ENCODE measurements at regions of chr19 and their contacts with region 1.

Region 1: DNA sequence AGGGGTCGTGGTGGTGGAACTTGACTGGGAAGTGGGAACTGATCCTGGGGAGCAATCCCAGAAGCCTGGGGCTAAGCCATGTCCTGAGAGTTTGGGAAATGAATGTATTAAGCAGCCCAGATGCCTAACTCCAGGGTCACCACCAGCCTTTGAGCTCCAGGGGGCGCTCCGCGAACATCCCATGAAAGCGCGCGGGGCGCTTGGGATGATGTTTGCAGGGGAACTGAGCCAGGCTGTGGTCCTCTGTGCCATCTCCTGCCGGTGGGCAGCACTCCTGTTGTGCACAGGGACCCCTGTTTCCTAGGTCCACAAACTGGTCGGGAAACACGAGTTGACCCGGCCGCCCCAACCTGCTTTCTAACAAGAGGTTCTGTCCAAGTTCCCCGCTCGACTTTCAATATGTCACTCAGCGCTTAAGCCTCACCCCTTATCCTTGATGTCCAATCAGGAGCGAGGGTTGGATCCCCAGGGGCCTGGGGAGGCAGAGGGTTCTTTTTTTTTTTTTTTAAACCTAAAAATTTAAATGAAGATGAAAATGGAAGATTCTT is 14.4 kb downstream of the LEUTX start:
- DNase-seq: peak; percentile 85
- ATAC-seq: peak; percentile 92
- H3K4me3 Mint-ChIP-seq: peak overlapping the region; percentile 69
- H3K27ac Mint-ChIP-seq: no peak overlapping the region
- H3K4me1 Mint-ChIP-seq: peaks cover 28% of the 10 kb centered on the region
- H3K27me3 Mint-ChIP-seq: peaks cover 3% of the 10 kb centered on the region; the same call in 1 of the 2 replicates
- CTCF ChIP-seq: peak; percentile 93

Region 2: GRCh38 chr19:39705578-39706188 is 87.4 kb before region 1 on chr19:
- CTCF ChIA-PET with region 1: no interaction called
- POLR2A ChIA-PET with region 1: no interaction called
- DNase-seq: no peak
- ATAC-seq: no peak
- H3K4me3 Mint-ChIP-seq: no peak overlapping the region
- H3K27ac Mint-ChIP-seq: no peak overlapping the region
- H3K4me1 Mint-ChIP-seq: no peaks in the 10 kb centered on the region
- H3K27me3 Mint-ChIP-seq: peaks cover 12% of the 10 kb centered on the region
- CTCF ChIP-seq: no peak

Region 3: DNA sequence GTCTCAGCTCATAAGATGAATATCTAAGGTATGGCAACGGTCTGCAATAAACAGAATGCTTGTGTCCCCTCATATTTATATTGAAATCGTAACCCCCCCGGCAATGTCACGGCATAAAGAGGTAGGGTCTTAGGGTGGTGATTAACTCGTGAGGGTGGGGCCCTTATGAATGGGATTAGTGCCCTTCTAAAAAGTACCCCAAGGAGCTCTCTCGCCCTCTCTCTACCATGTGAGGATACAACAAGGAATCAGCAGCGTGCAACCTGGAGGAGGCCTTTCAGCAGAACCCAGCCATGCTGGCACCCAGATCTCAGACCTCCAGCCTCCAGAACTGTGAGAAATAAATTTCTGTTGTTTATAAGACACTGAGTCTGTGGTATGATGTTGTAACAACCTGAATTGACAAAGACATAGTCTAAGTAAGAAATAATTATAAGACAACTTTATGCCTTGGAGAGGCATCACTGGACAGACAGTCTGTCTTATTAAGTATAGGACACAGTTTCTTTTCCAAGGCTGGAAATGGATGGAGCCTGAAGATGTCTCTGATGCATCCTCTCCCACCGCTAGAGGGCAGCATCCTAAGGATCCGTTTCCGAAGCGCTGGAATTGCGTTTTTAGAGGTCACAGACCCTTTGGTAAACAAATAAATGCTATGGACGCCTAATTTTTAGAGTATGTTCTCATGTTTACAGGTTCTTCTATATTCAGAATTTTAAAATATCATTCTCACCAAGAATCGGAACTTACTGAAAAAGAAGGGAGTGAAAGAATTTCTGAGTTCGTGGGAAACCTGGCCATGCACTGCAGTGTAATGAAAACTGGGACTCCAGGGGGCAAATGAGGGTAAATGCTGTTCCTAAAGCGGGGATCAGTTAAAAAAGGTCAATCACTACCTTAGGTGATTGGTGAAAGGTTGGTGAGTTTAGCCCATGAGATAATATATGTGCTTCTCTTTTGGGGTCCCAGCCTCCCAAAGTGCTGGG is 27.7 kb before region 1 on chr19:
- CTCF ChIA-PET with region 1: interaction called, 43 read pairs
- POLR2A ChIA-PET with region 1: no interaction called
- DNase-seq: peak; percentile 73
- ATAC-seq: peak; percentile 38
- H3K4me3 Mint-ChIP-seq: no peak overlapping the region
- H3K27ac Mint-ChIP-seq: no peak overlapping the region
- H3K4me1 Mint-ChIP-seq: peaks cover 34% of the 10 kb centered on the region
- H3K27me3 Mint-ChIP-seq: peaks cover 2% of the 10 kb centered on the region; the same call in 1 of the 2 replicates
- CTCF ChIP-seq: peak; percentile 83

Region 4: DNA sequence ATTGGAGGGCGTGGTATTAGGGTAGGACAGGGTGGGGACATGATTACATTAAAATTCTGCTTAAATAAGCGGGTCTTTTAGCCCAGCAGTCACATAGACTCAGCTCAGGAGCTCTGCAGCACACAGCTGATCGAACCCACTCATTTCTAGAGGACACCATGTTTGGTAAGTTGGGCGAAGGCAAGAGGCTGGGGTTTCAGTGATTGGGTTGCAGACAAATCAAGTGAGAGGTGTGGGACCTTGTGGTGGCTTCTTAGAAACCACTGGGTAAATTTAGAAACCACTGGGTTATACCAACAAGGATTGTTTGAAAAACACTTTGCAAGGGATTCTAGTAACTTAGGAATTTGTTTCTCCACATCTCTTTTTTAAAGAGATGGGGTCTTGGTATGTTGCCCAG is 14.3 kb before region 1 on chr19 and contains the start of gene LEUTX:
- CTCF ChIA-PET with region 1: interaction called, 21 read pairs
- POLR2A ChIA-PET with region 1: no interaction called
- DNase-seq: no peak
- ATAC-seq: no peak
- H3K4me3 Mint-ChIP-seq: no peak within 1 kb of the TSS
- H3K27ac Mint-ChIP-seq: no peak within 1 kb of the TSS
- H3K4me1 Mint-ChIP-seq: no peaks in the 10 kb centered on the region
- H3K27me3 Mint-ChIP-seq: peaks cover 10% of the 10 kb centered on the region
- CTCF ChIP-seq: no peak
- total RNA-seq, gene LEUTX: not detected in 3 replicates

Region 5: DNA sequence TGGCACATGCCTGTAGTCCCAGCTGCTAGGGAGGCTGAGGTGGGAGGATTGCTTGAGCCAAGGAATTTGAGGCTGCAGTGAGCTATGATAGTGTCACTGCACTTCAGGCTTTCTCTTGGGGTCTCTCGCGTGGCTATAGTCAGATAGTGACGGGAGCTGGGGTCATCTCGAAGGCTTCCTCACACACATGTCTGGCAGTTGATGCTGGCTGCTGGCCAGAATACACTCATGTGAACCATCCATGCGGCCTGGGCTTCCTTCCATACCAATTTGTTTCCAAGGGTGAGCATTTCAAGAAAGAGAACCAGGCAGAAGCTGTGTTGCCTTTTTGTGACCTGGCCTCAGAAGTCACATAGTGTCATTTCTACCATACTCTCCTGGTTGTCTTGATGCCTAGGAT is 12.0 kb after region 1 on chr19:
- CTCF ChIA-PET with region 1: interaction called, 40 read pairs
- POLR2A ChIA-PET with region 1: interaction called, 4 read pairs
- DNase-seq: no peak
- ATAC-seq: no peak
- H3K4me3 Mint-ChIP-seq: no peak overlapping the region
- H3K27ac Mint-ChIP-seq: no peak overlapping the region
- H3K4me1 Mint-ChIP-seq: peaks cover 11% of the 10 kb centered on the region
- H3K27me3 Mint-ChIP-seq: peaks cover 2% of the 10 kb centered on the region
- CTCF ChIP-seq: no peak

Region 6: DNA sequence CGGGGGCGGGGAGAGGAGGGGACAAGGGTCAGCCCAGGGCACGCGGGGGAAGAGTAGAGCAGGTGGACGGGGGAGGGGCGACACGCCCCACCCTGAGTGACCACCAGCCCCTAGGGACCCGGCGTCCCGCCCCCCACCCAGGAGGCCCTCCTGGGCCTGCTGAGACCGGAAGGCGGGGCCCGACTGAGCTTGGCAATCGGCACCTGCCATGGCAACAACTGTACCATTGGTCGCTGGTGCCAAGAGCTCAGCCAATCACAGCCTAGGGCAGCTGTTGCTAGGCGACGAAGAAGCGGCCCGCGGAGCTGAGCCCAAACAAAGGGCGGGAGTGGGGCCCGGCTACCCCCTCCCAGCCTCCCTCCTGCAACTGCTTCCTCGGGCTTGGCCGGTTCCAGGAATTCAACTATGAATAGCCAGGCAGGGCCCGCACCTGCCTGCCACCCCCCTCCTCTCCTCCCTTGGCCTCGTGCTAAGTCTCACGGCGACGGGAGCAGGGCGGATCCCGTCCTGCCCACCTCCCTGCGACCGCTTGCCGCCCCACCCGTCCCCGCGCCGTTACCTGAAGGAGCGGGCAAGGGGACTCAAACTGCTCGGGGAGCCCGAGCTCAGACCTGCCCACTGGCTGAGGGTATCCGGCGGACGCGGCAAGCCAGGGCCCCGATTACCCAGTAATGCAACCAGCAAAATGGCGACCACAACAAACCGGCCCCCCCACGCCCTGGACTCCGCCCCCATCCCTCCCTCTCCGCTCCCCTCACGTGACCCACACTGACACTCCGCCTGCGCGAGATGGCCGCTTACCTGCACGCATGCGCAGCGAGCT is 40.6 kb after region 1 on chr19 and contains the start of gene DYRK1B:
- CTCF ChIA-PET with region 1: interaction called, 14 read pairs
- POLR2A ChIA-PET with region 1: interaction called, 3 read pairs
- DNase-seq: peak; percentile 96
- ATAC-seq: peak; percentile 91
- H3K4me3 Mint-ChIP-seq: peak within 1 kb of the TSS; percentile 72
- H3K27ac Mint-ChIP-seq: peak within 1 kb of the TSS; percentile 98
- H3K4me1 Mint-ChIP-seq: peaks cover 13% of the 10 kb centered on the region
- H3K27me3 Mint-ChIP-seq: no peaks in the 10 kb centered on the region
- CTCF ChIP-seq: no peak
- total RNA-seq, gene DYRK1B: 12.2 to 14.0 TPM (median 13.2 TPM) in 3 replicates

Region 7: DNA sequence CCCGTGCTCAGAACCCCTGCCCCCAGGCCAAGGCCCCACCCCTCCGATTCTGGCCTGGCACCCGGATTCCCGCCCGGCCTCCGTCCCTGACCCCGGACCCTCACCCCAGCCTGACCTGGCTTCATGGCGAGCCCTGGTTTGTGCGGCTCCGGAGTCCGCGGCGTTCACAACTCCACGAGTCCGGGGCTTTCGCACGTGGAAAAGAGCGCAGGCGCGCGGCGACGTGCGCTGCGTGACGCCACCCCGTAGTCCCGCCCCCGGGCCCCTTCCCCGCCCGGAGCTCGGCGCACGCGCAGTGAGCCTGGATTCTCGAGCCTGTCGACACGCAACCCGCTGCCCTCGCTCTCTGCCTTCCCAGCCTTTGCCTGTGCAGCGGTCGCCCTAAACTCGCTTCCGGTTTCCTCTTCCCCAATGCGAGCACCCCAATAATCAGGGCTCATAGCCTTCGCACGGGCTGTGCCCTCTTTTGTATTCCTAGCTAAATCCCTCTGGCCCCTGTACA is 53.2 kb after region 1 on chr19 and contains the start of gene FBL:
- CTCF ChIA-PET with region 1: interaction called, 20 read pairs
- POLR2A ChIA-PET with region 1: interaction called, 6 read pairs
- DNase-seq: peak; percentile 93
- ATAC-seq: peak; percentile 85
- H3K4me3 Mint-ChIP-seq: peak within 1 kb of the TSS; percentile 94
- H3K27ac Mint-ChIP-seq: peak within 1 kb of the TSS; percentile 87
- H3K4me1 Mint-ChIP-seq: peaks cover 40% of the 10 kb centered on the region
- H3K27me3 Mint-ChIP-seq: peaks cover 6% of the 10 kb centered on the region
- CTCF ChIP-seq: no peak
- total RNA-seq, gene FBL: 576 to 620 TPM (median 610 TPM) in 3 replicates

Region 8: GRCh38 chr19:39970675-39971379 is 177.8 kb after region 1 on chr19 and contains the start of gene PSMC4:
- CTCF ChIA-PET with region 1: interaction called, 19 read pairs
- POLR2A ChIA-PET with region 1: interaction called, 4 read pairs
- DNase-seq: peak; percentile 97
- ATAC-seq: peak; percentile 100
- H3K4me3 Mint-ChIP-seq: peak within 1 kb of the TSS; percentile 97
- H3K27ac Mint-ChIP-seq: peak within 1 kb of the TSS; percentile 96
- H3K4me1 Mint-ChIP-seq: peaks cover 25% of the 10 kb centered on the region
- H3K27me3 Mint-ChIP-seq: no peaks in the 10 kb centered on the region
- CTCF ChIP-seq: no peak
- total RNA-seq, gene PSMC4: 96.7 to 105 TPM (median 97.2 TPM) in 3 replicates

Measured in WTC11 (cell line).